Ovary (tissue), 10 donors: ENCODE measurements at regions of chr17 and their contacts with region 1.

Region 1: GRCh38 chr17:40130352-40131042 is 8.7 kb downstream of the MSL1 start:
- DNase-seq: no peak
- H3K4me3 ChIP-seq: no peak overlapping the region
- H3K27ac ChIP-seq: no peak overlapping the region
- H3K4me1 ChIP-seq: no peaks in the 10 kb centered on the region
- H3K27me3 ChIP-seq: no peaks in the 10 kb centered on the region
- CTCF ChIP-seq: no peak
- EP300 ChIP-seq: no peak
- POLR2A ChIP-seq: no peak

Region 2: GRCh38 chr17:40075942-40076498 is 54.5 kb before region 1 on chr17:
- intact Hi-C with region 1: loop called in 1 of 4 experiments (anchors 2 kb)
- DNase-seq: no peak
- H3K4me3 ChIP-seq: no peak overlapping the region
- H3K27ac ChIP-seq: peak overlapping the region in 1 of 2 donors; percentile 89
- H3K4me1 ChIP-seq: peaks cover 36% of the 10 kb centered on the region
- H3K27me3 ChIP-seq: no peaks in the 10 kb centered on the region
- CTCF ChIP-seq: no peak
- EP300 ChIP-seq: no peak
- POLR2A ChIP-seq: no peak

Region 3: DNA sequence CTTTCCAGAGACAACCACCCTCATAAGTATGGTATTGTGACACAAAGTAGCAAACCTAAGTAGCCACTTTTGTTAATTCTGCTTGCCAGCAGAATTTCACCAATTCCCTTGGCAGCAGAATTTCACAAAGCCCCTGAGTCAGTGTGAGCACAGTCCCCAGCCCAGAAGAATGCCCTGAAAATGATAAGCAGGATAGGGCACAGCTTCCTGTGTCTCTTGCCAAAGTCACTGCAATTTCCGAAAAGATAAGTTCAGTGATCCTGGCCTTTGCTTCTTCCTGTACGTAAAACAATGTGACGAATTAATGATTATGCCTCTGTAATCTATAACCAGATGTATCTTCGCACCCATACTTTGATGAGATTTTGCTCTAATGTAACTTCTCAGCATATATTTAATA is 72.6 kb after region 1 on chr17:
- intact Hi-C with region 1: no loop called
- DNase-seq: no peak
- H3K4me3 ChIP-seq: no peak overlapping the region
- H3K27ac ChIP-seq: no peak overlapping the region
- H3K4me1 ChIP-seq: no peaks in the 10 kb centered on the region
- H3K27me3 ChIP-seq: no peaks in the 10 kb centered on the region
- CTCF ChIP-seq: no peak
- EP300 ChIP-seq: no peak
- POLR2A ChIP-seq: no peak

Region 4: DNA sequence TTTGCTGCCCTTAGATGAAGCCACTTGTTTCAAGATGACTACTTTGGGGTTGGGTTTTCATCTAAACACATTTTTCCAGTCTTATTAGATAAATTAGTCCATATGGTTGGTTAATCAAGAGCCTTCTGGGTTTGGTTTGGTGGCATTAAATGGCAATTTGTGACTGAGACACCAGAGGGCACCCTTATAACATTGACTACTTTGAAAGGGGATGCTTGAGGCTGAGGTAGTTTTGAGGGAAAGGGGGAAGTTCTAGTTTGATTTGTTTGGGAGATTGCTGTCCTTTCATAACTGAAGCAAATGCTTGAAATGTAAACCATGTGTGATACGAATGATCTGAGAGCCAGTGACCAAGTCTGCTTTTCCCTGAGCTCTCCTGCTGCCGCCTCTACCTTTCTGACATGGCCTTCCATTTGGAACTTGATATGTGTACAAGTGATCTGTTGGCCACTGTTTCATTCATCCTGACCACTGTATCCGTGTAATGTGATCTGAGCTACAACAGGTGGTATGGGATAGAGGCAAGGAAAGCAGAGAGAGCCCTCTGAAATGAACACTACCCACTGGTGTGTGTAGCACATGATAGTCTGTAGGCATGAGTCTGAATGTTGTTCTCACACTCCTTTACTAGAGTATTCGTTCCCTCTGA is 172.6 kb after region 1 on chr17:
- intact Hi-C with region 1: no loop called
- DNase-seq: peak in 2 of 5 donors; percentile 32 to 68
- H3K4me3 ChIP-seq: no peak overlapping the region
- H3K27ac ChIP-seq: no peak overlapping the region
- H3K4me1 ChIP-seq: peaks cover 21% of the 10 kb centered on the region
- H3K27me3 ChIP-seq: no peaks in the 10 kb centered on the region
- CTCF ChIP-seq: peak; percentile 61 to 82 (median 78)
- EP300 ChIP-seq: no peak
- POLR2A ChIP-seq: no peak